ENCODE measurements at regions of chr4 and their contacts with region 1.

Region 1: DNA sequence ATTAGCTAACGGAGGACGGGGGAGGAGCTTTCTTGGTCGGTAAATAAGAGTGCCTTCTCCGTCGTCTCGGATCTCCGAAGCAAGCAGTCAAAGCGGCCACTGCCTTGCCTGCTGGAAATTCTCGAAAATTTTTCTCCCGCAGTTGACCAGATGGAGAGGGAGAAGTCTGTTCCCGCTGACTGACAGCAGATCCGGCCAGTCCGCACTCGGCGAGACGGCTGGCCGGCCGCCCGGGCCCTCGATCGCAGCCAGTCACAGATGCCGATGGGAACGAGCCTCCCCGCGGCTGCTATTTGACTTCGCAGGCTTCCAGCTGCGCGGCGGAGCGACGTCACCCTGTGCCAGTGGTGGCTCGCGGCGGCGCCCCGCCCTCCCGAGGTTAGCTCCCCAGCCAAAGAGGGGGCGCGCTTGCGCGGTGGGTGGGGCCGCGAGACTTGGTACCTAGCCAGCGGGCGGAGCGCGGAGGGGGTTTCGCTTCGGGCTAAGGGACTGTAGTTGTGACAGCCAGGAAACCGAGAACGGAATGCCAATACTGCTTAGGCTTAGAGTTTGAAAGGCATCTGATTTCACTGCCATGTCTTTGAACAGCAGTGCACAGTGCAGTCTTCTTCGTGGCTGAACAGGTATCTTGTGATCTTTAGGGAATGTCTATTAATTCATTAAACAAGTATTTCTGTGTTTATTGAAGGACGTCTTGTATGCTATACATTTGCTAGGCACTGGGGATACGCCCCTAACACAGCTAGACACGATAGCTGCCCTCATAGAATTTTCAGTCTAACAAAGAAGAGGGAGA is at the start of gene PPM1K:
- DNase-seq: peak; percentile 98 to 100 (median 99)
- ATAC-seq: peak; percentile 84 to 85
- H3K4me3 Mint-ChIP-seq: peak within 1 kb of the TSS; percentile 89 to 99 (median 98)
- H3K27ac Mint-ChIP-seq: peak within 1 kb of the TSS; percentile 98 to 100 (median 99)
- H3K4me1 Mint-ChIP-seq: peaks cover 20 to 57% (median 41%) of the 10 kb centered on the region in 4 donors
- H3K27me3 Mint-ChIP-seq: no peaks in the 10 kb centered on the region
- polyA plus RNA-seq, gene PPM1K: 64.7 to 85.3 (median 77.2) TPM

Region 2: DNA sequence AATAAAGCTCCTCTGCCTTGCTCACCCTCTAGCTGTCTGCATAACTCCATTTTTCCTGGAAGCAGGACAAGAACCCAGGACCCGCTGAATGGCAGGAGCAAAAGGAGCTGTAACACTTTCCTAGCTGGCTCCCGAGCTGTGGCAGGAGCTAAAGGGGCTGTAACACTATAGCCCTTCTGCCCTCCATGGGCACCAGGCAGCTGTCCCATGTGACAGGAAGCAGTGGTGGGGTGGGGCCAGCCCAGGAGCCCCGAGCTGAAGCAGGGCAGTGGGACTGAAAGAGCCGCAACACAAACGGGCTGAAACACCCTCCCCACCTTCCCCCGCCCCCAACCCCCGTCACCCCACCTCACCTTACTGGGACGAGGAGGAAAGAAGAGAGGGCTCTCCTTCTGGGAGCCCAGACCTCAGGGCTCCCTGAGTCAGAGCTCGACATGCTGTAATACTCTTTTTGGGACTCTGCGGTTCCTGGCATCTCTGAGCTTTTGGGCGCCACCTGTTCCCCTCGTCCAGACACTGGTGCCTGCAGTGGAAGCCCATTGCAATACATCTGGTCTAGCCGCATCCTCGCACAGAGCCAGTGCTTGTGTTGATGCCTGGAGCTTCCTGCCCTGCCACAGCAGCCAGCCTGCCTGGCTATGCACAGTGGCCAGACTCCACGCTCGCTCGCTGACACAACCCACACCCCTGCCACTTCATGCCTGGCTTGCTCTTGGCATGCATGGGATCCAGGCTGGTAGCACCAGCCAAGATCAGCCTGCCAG is 39.6 kb before region 1 on chr4:
- POLR2A ChIA-PET with region 1: interaction called, 22 read pairs
- DNase-seq: peak in 9 of 10 donors; percentile 14 to 71 (median 36)
- ATAC-seq: peak; percentile 95 to 98
- H3K4me3 Mint-ChIP-seq: peak overlapping the region; percentile 39 to 89 (median 74)
- H3K27ac Mint-ChIP-seq: peak overlapping the region; percentile 16 to 92 (median 67)
- H3K4me1 Mint-ChIP-seq: peaks cover 11 to 17% (median 14%) of the 10 kb centered on the region in 4 donors
- H3K27me3 Mint-ChIP-seq: peaks cover 0 to 3% (median 0%) of the 10 kb centered on the region in 5 donors

Region 3: GRCh38 chr4:88320780-88321373 is 36.2 kb after region 1 on chr4:
- POLR2A ChIA-PET with region 1: interaction called, 37 read pairs
- DNase-seq: peak in 5 of 10 donors; percentile 6 to 42 (median 29)
- ATAC-seq: peak; percentile 87 to 91
- H3K4me3 Mint-ChIP-seq: peak overlapping the region; percentile 50 to 93 (median 86)
- H3K27ac Mint-ChIP-seq: peak overlapping the region; percentile 40 to 99 (median 94)
- H3K4me1 Mint-ChIP-seq: peaks cover 10 to 32% (median 23%) of the 10 kb centered on the region in 4 donors
- H3K27me3 Mint-ChIP-seq: no peaks in the 10 kb centered on the region

Region 4: DNA sequence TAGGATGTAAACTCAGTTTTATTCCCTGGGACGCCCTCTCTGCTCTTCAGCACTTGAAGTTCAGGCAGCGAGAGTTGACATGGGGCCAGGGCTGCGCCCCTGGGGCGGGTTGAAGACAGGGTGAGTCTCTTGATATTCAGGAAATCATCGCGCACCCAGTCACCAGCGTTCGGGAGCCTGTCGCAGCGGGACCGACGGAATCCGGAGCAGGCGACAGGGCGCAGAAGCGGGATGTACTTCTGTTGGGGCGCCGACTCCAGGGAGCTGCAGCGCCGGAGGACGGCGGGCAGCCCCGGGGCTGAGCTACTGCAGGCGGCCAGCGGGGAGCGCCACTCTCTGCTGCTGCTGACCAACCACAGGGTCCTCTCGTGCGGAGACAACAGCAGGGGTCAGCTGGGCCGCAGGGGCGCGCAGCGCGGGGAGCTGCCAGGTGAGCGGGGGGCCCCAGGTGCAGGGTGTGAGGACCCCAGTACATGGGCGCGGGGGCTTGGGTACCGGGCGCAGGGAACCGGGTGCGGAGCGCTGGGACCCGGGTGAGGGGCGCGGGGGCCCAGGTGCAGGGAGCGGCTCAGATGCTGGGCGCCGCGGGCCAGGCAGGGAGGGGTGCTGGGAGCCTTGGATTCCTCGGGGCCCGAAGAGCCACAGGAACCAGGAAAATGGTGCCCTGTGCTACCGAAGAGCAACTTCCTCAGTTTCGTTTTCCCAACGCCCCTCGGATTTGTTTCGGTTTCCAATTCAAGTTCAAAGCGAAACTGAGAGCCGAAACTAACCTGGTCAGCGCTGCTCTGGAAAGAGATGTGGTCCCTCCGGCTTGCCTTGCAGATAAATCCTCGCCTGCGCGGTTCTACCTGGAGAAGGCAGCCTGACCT is 94.3 kb after region 1 on chr4 and contains the start of gene HERC6:
- POLR2A ChIA-PET with region 1: interaction called, 40 read pairs
- DNase-seq: peak; percentile 43 to 80 (median 68)
- ATAC-seq: peak; percentile 69 to 74
- H3K4me3 Mint-ChIP-seq: peak within 1 kb of the TSS; percentile 90 to 97 (median 96)
- H3K27ac Mint-ChIP-seq: peak within 1 kb of the TSS; percentile 90 to 98 (median 96)
- H3K4me1 Mint-ChIP-seq: peaks cover 16 to 47% (median 38%) of the 10 kb centered on the region in 4 donors
- H3K27me3 Mint-ChIP-seq: no peaks in the 10 kb centered on the region
- polyA plus RNA-seq, gene HERC6: 10.8 to 18.4 (median 18.1) TPM

Region 5: GRCh38 chr4:88456757-88457306 is 172.2 kb after region 1 on chr4 and contains the start of gene HERC5:
- POLR2A ChIA-PET with region 1: interaction called, 38 read pairs
- DNase-seq: peak; percentile 86 to 94 (median 90)
- ATAC-seq: peak; percentile 95 to 96
- H3K4me3 Mint-ChIP-seq: peak within 1 kb of the TSS; percentile 87 to 100 (median 100)
- H3K27ac Mint-ChIP-seq: peak within 1 kb of the TSS; percentile 96 to 100 (median 98)
- H3K4me1 Mint-ChIP-seq: peaks cover 6 to 41% (median 24%) of the 10 kb centered on the region in 4 donors
- H3K27me3 Mint-ChIP-seq: no peaks in the 10 kb centered on the region
- polyA plus RNA-seq, gene HERC5: 5.7 to 7.3 (median 6.5) TPM

Measured in naive thymus-derived CD8-positive, alpha-beta T cell (primary cell).